ENCODE measurements at regions of chr11 and their contacts with region 1.

Region 1: DNA sequence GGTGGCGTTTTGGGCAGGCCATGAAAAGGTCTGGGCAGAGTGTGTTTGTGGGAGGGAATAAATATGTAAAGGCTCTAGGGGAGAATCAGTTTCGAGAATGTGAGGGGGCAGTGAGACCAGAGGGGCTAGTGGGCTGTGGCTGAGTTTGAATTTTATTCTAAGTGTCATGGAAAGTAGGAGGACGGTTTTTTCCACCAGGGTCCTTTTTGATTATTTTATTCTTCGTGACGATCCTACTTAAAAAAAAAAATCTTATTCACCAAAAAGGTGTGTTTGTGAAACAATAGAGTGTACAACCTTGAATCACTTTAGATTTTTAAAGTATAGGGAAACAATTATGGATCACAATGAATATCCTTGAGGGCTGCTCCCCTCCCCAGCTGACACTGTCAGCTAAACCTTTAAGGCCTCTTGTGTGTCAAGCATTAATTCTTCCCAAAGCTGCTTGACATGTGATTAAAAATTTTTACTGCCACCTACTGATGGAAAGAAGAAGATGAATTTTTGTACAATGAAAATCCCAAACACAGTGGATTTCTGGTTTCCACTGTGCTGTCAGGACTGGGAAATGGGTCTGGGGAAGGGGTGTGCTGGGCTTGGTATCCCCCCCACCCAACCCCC is 107.5 kb upstream of the OR4B1 start:
- DNase-seq: peak; percentile 94
- H3K4me3 ChIP-seq: peak overlapping the region; percentile 35
- H3K27ac ChIP-seq: peak overlapping the region; percentile 62
- H3K4me1 ChIP-seq: peaks cover 10% of the 10 kb centered on the region
- H3K27me3 ChIP-seq: no peaks in the 10 kb centered on the region
- CTCF ChIP-seq: peak; percentile 67

Region 2: DNA sequence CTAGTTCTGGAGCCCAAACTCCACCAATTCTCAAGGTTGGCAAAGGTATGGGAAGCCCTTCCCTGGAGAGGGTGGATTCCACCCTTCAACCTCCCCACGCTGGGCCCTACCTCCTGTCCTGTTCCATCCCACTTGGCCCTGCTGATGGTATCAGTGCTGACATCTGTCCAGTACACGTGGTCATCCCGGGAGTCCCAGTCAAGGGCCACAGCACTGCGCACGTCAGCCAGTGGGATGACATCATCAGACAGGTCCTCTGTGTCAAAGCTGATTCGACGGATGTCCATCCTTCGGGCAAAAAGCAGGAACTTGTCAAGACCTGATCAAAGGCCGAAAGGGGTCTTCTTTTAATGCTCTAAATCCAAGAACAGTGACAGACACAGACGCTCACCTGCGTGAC is 1222.9 kb before region 1 on chr11:
- CTCF ChIA-PET with region 1: no interaction called
- POLR2A ChIA-PET with region 1: no interaction called
- intact Hi-C with region 1: no loop called
- DNase-seq: no peak
- H3K4me3 ChIP-seq: no peak overlapping the region
- H3K27ac ChIP-seq: no peak overlapping the region
- H3K4me1 ChIP-seq: no peaks in the 10 kb centered on the region
- H3K27me3 ChIP-seq: no peaks in the 10 kb centered on the region
- CTCF ChIP-seq: no peak

Region 3: GRCh38 chr11:47766305-47767227 is 342.6 kb before region 1 on chr11:
- CTCF ChIA-PET with region 1: interaction called, 3 read pairs
- POLR2A ChIA-PET with region 1: no interaction called
- intact Hi-C with region 1: loop called (anchors 1 kb)
- DNase-seq: peak; percentile 86
- H3K4me3 ChIP-seq: peak overlapping the region; percentile 60
- H3K27ac ChIP-seq: peak overlapping the region; percentile 97
- H3K4me1 ChIP-seq: peaks cover 21% of the 10 kb centered on the region
- H3K27me3 ChIP-seq: no peaks in the 10 kb centered on the region
- CTCF ChIP-seq: no peak

Region 4: GRCh38 chr11:47863189-47863892 is 245.8 kb before region 1 on chr11:
- CTCF ChIA-PET with region 1: interaction called, 9 read pairs
- POLR2A ChIA-PET with region 1: no interaction called
- intact Hi-C with region 1: loop called (anchors 2 kb)
- DNase-seq: peak; percentile 98
- H3K4me3 ChIP-seq: no peak overlapping the region
- H3K27ac ChIP-seq: peak overlapping the region; percentile 83
- H3K4me1 ChIP-seq: peaks cover 56% of the 10 kb centered on the region
- H3K27me3 ChIP-seq: no peaks in the 10 kb centered on the region
- CTCF ChIP-seq: no peak

Region 5: DNA sequence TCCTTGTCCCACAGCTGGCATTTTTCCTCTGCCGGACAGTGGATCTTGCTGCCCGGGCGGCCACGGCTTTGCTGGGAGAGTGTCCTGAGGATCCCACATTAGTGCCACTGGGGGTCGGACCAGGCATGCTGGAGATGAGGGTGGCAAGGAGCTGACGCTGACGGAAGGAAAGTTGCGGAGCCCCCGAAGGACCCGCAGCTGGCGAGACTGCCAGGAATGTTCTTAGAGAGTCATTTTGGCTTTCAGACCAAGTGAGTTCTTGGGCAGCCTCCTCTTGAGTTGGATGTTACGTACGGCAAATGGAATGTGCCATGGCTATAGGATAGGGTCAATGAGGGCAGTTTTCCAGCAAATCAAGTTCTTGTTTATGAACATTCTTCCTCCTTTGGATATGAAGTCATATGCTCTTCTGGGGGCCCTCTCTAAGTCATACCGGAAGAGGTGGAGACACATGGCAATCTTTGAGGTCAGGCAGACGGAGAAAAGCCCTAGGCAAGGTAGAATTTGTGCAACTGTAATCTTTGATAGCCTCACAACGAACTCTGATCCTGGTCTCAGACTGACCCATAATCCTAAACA is 203.6 kb before region 1 on chr11:
- CTCF ChIA-PET with region 1: no interaction called
- POLR2A ChIA-PET with region 1: no interaction called
- intact Hi-C with region 1: no loop called
- DNase-seq: no peak
- H3K4me3 ChIP-seq: no peak overlapping the region
- H3K27ac ChIP-seq: no peak overlapping the region
- H3K4me1 ChIP-seq: no peaks in the 10 kb centered on the region
- H3K27me3 ChIP-seq: no peaks in the 10 kb centered on the region
- CTCF ChIP-seq: no peak

Measured in A673 (cell line).